Body of pancreas (tissue), 4 donors: ENCODE measurements at regions of chr9 and their contacts with region 1.

Region 1: DNA sequence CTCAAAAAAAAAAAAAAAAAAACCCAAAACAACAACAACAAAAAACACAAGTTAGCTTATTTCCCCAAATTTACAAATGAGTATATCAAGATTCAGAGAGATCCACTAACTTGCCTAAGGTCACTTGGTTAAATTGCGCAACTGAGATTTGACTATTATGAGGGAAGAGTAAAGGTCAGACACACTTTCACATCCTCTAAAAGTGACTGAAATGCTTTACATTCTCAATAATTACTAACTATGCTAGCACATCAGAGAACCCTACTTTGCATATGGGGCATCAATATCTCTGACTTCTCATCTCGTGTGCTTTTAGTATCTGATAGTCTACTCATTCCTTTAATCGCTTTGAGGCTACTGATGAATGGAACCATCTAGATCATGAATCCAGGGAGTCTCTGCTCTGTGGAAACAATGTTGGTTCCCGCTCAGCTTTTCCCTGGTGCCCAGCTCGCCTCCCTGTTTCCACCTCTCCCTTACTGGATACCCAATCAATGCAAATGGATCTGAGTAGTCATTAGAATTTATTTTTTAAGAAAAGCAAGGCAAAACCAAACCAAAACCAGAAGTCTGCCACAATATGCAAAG is 182.1 kb upstream of the TRIM32 start:
- DNase-seq: no peak
- ATAC-seq: no peak
- H3K4me3 ChIP-seq: no peak overlapping the region
- H3K27ac ChIP-seq: no peak overlapping the region
- H3K4me1 ChIP-seq: no peaks in the 10 kb centered on the region
- H3K27me3 ChIP-seq: no peaks in the 10 kb centered on the region
- CTCF ChIP-seq: no peak
- POLR2A ChIP-seq: no peak

Region 2: DNA sequence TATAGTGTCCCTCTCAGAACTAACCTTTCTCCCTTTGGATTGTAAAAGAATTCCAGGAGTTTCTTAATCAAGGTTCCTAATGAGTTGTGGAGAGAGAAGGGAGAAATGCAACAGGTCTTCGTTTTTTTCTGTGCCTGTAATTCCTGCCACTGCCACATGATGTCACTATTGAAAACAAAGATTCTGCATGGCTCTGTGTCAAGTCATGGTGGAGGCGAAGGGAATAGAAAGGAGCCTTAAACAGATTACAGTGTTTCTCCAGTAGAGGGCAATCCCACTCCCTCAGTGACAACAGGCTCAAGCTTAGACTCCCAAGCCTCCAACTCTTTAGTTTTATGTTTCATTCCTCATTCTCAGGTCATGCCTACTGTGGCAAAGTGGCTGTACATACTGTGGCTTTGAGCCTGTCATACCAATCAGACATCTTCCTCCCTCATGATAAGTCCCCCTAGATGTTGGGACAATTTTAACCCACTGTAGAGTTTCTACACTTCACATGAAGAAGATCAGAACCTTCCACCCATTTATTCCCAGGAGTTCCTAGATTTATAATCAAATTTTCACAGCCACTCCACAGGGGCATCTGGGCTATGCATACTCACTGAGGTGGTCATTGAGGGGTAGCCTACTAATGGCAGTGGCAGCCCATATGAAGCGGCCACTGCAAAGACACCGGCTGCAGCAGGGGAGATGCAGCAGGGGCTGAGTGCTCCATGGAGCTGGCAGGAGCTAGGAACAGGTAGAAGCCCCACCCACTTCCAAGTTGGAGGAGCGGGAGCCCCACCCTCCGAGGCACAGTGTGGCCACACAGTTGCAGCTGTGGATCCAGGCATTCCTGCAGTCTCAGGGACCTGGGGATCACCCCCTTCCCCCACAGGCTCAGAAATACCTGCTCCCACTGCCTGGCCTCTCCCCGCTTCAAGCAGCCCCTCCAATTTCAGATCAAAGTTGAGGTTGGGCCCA is 84.7 kb after region 1 on chr9:
- intact Hi-C with region 1: no loop called
- DNase-seq: peak in 1 of 4 donors; percentile 22
- ATAC-seq: no peak
- H3K4me3 ChIP-seq: no peak overlapping the region
- H3K27ac ChIP-seq: no peak overlapping the region
- H3K4me1 ChIP-seq: no peaks in the 10 kb centered on the region
- H3K27me3 ChIP-seq: no peaks in the 10 kb centered on the region
- CTCF ChIP-seq: peak; percentile 11 to 55 (median 33)
- POLR2A ChIP-seq: no peak

Region 3: GRCh38 chr9:116646661-116647512 is 141.9 kb after region 1 on chr9:
- intact Hi-C with region 1: loop called (anchors 5 kb)
- DNase-seq: peak in 1 of 4 donors; percentile 22
- ATAC-seq: peak; percentile 50
- H3K4me3 ChIP-seq: no peak overlapping the region
- H3K27ac ChIP-seq: no peak overlapping the region
- H3K4me1 ChIP-seq: no peaks in the 10 kb centered on the region
- H3K27me3 ChIP-seq: no peaks in the 10 kb centered on the region
- CTCF ChIP-seq: peak in 6 of 7 experiments; percentile 36 to 59 (median 55)
- POLR2A ChIP-seq: no peak